ENCODE measurements at regions of chr11 and their contacts with region 1.

Region 1: DNA sequence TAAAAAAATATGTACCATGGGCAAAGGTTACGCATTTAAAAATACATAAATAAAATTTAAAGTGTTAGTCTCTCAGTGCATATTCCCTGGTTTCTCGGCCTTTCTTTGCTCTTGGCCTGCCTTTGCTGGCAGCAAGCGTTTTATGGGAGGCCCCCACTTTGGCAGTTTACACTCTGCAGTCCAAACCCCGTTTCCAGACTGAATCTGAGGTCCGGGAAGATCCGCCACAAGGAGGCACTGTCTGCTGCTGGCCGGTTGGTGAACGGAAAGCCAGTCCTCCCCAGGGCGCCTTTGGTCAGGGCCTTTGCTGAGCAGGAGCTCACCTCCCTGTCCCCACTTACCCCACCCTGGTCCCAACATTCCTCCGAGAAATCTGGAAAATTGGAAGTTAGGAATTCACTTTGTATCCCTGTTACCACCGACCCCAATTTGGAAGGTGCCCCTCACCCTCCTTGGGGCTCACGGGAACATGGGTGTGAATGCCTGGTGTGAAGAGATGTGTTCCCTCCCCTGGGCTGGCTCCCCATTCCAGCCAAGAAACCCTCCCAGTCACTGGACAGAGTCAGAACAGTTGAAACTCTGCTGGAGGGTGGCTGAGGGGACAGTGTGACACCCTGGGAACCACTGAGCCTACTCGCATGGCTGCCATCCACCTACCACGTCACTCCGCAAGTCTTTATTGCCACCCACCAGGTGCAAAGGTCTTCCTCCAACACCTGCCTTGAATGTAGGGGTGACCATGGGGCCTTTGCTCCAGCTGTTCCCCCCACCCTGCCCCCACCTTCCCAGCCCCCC is 9.4 kb upstream of the SF1 start:
- DNase-seq: peak; percentile 63
- H3K4me3 Mint-ChIP-seq: no peak overlapping the region
- H3K27ac Mint-ChIP-seq: peak overlapping the region; percentile 35
- H3K4me1 Mint-ChIP-seq: peaks cover 4% of the 10 kb centered on the region
- H3K27me3 Mint-ChIP-seq: no peaks in the 10 kb centered on the region

Region 2: GRCh38 chr11:64803163-64803845 is 15.6 kb after region 1 on chr11 and contains the start of gene MAP4K2:
- CTCF ChIA-PET with region 1: interaction called, 12 read pairs
- POLR2A ChIA-PET with region 1: interaction called, 10 read pairs
- DNase-seq: peak; percentile 91
- H3K4me3 Mint-ChIP-seq: peak within 1 kb of the TSS; percentile 85
- H3K27ac Mint-ChIP-seq: peak within 1 kb of the TSS; percentile 86
- H3K4me1 Mint-ChIP-seq: peaks cover 39% of the 10 kb centered on the region
- H3K27me3 Mint-ChIP-seq: no peaks in the 10 kb centered on the region
- total RNA-seq, gene MAP4K2: 95.6 to 98.0 TPM

Measured in activated CD4-positive, alpha-beta memory T cell treated with anti-CD3 and anti-CD28 coated beads, Interleukin-2, amount 10 ng/mL, durations not matched to agents 7 days and 5 days (primary cell).